Tibial artery (tissue), 4 donors: ENCODE measurements at regions of chr2 and their contacts with region 1.

Region 1: GRCh38 chr2:222860740-222861410 is at the start of gene ACSL3:
- DNase-seq: peak; percentile 97 to 98
- H3K4me3 ChIP-seq: peak within 1 kb of the TSS; percentile 76 to 82
- H3K27ac ChIP-seq: peak within 1 kb of the TSS; percentile 90 to 98
- H3K4me1 ChIP-seq: peaks cover 5 to 40% (median 26%) of the 10 kb centered on the region in 4 donors
- H3K27me3 ChIP-seq: no peaks in the 10 kb centered on the region
- CTCF ChIP-seq: peak in 1 of 2 experiments; percentile 5

Region 2: DNA sequence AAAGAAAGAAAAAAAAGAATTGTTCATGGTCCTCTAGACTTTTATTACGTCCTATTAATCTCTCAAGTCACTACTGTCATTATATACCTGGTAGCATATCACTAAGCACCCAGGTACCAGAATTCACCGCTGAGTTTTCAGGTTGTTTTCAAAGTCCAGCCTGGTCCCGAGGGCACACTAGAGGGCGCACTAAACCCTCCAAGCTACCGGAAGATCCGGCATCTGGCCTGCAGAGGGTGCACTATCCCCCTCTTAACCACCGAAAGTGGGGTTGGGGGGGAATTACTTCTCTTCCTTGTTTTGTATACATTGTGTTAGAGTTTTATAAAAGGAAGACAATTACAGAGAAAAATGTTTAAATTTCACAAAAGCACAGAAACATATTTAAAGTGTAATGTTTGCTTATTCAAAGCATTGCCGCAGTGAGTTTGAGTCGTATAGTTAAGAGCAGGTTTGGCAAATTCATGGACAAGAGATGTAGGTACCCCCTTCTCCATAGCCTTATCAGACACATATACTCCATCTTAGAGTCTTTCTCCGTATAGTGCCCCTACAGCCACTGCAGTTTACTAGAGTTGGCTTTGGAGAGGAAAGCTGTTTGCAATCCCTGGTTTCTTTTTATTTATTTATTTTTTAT is 170.2 kb before region 1 on chr2:
- intact Hi-C with region 1: loop called (anchors 5 kb)
- DNase-seq: peak; percentile 49 to 79
- H3K4me3 ChIP-seq: no peak overlapping the region
- H3K27ac ChIP-seq: no peak overlapping the region
- H3K4me1 ChIP-seq: peaks cover 0 to 26% (median 3%) of the 10 kb centered on the region in 4 donors
- H3K27me3 ChIP-seq: no peaks in the 10 kb centered on the region
- CTCF ChIP-seq: peak; percentile 88 to 96

Region 3: DNA sequence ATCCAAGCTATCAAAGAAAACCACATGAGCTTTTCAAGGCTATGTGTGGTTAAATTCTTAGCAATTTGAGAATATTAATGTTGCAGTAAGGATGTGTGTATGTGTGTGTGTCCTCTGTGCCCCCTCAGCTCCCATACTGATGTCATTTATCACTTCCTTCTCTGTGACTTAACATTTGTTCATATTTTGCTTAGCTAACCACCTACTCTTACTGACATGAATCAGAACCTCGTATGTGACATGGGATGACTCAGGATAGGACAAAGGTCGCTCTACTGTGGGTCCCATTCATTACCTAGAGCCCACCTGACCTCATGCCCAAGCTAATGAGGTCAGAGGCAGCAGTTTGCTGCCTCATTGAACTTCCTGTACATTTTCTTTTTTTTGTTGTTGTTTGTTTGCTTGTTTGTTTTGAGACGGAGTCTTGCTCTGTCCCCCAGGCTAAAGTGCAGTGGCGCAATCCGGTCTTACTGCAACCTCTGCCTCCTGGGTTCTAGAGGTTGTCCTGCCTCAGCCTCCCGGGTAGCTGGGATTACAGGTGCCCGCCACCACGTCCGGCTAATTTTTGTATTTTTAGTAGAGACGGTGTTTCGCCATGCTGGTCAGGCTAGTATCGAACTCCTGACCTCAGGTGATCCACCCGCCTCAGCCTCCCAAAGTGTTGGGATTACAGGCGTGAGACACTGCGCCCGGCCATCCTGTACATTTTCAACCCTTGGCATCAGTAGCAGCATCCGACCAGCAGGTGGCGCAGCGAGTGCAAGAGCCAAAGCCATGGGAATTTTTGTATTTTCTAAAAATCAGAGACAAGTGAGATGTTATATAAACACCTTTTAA is 153.0 kb before region 1 on chr2:
- intact Hi-C with region 1: loop called (anchors 1 kb)
- DNase-seq: peak; percentile 85 to 86
- H3K4me3 ChIP-seq: no peak overlapping the region
- H3K27ac ChIP-seq: peak overlapping the region; percentile 21 to 72
- H3K4me1 ChIP-seq: peaks cover 0 to 68% (median 17%) of the 10 kb centered on the region in 4 donors
- H3K27me3 ChIP-seq: no peaks in the 10 kb centered on the region
- CTCF ChIP-seq: peak; percentile 91 to 97

Region 4: GRCh38 chr2:222884114-222884771 is 23.4 kb after region 1 on chr2:
- intact Hi-C with region 1: no loop called
- DNase-seq: no peak
- H3K4me3 ChIP-seq: no peak overlapping the region
- H3K27ac ChIP-seq: peak overlapping the region in 1 of 2 donors; percentile 26
- H3K4me1 ChIP-seq: peaks cover 0 to 75% (median 29%) of the 10 kb centered on the region in 4 donors
- H3K27me3 ChIP-seq: no peaks in the 10 kb centered on the region
- CTCF ChIP-seq: no peak